ENCODE measurements at regions of chr1 and their contacts with region 1.

Region 1: GRCh38 chr1:171313835-171314320 is at the start of gene FMO4:
- DNase-seq: peak; percentile 93
- H3K4me3 Mint-ChIP-seq: peak within 1 kb of the TSS; percentile 58
- H3K27ac Mint-ChIP-seq: peak within 1 kb of the TSS; percentile 85
- H3K4me1 Mint-ChIP-seq: no peaks in the 10 kb centered on the region
- H3K27me3 Mint-ChIP-seq: no peaks in the 10 kb centered on the region
- CTCF ChIP-seq: peak; percentile 79
- total RNA-seq, gene FMO4: 2.5 and 3.4 TPM in 2 replicates

Region 2: DNA sequence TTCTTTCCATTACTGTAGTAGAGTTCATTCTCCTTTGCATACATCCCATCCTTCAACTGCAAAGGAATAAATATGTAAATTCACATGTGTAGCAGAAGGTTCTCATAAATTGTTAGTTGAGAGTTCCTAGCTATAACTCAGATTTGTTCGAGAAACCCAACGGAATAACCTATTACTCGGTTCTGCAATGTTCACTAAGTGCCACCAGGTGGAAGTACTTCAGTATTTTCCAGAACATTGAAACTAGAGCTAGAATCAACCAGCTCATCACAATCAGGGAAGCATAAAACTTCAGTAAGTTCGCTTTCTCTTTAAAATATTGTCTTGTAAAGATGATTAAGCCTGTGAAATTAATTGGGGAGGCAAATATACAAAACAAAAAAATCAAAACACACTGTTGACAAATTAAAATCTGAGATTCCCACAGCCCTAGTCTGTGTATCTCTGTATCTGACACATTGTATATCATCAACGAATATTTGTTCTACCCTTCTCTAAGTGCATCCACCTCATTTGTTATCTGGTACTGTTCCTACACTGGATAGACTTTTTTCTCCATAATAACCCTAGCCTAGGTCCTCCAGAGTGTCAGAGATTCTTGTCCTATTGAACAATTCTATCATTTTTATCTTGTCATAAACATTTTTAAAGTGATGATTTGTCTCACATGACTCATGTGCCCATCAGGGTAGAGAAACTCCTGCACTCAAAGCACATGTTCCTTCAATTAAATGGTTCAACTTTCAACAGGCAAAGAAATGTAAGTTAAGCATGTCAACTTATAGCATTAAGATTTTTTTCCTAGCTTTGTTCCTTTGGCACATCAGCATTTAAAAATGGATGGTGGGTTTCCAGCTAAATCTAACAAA is 346.6 kb before region 1 on chr1:
- CTCF ChIA-PET with region 1: interaction called, 43 read pairs
- intact Hi-C with region 1: loop called (anchors 5 kb)
- DNase-seq: peak; percentile 18
- H3K4me3 Mint-ChIP-seq: no peak overlapping the region
- H3K27ac Mint-ChIP-seq: no peak overlapping the region
- H3K4me1 Mint-ChIP-seq: no peaks in the 10 kb centered on the region
- H3K27me3 Mint-ChIP-seq: peaks cover 11% of the 10 kb centered on the region
- CTCF ChIP-seq: peak; percentile 46

Region 3: GRCh38 chr1:171226747-171227370 is 87.0 kb before region 1 on chr1:
- CTCF ChIA-PET with region 1: interaction called, 10 read pairs
- intact Hi-C with region 1: no loop called
- DNase-seq: peak; percentile 62
- H3K4me3 Mint-ChIP-seq: no peak overlapping the region
- H3K27ac Mint-ChIP-seq: no peak overlapping the region
- H3K4me1 Mint-ChIP-seq: no peaks in the 10 kb centered on the region
- H3K27me3 Mint-ChIP-seq: no peaks in the 10 kb centered on the region
- CTCF ChIP-seq: peak; percentile 84

Region 4: GRCh38 chr1:171254859-171255605 is 58.8 kb before region 1 on chr1:
- CTCF ChIA-PET with region 1: interaction called, 10 read pairs
- intact Hi-C with region 1: no loop called
- DNase-seq: no peak
- H3K4me3 Mint-ChIP-seq: no peak overlapping the region
- H3K27ac Mint-ChIP-seq: no peak overlapping the region
- H3K4me1 Mint-ChIP-seq: no peaks in the 10 kb centered on the region
- H3K27me3 Mint-ChIP-seq: peaks cover 28% of the 10 kb centered on the region
- CTCF ChIP-seq: no peak

Region 5: GRCh38 chr1:171403371-171403770 is 89.5 kb after region 1 on chr1:
- CTCF ChIA-PET with region 1: interaction called, 7 read pairs
- intact Hi-C with region 1: loop called (anchors 1 kb)
- DNase-seq: no peak
- H3K4me3 Mint-ChIP-seq: no peak overlapping the region
- H3K27ac Mint-ChIP-seq: peak overlapping the region; percentile 13
- H3K4me1 Mint-ChIP-seq: peaks cover 24% of the 10 kb centered on the region
- H3K27me3 Mint-ChIP-seq: no peaks in the 10 kb centered on the region
- CTCF ChIP-seq: no peak